Caco-2 (cell line): ENCODE measurements at regions of chr11 and their contacts with region 1.

Region 1: GRCh38 chr11:65274735-65275682 is 13.2 kb downstream of the POLA2 start:
- DNase-seq: peak; percentile 91 to 93
- H3K4me3 ChIP-seq: no peak overlapping the region; the same call in 1 of the 2 replicates
- H3K4me3 Mint-ChIP-seq: peak overlapping the region; percentile 63
- H3K27ac Mint-ChIP-seq: peak overlapping the region; percentile 90
- H3K4me1 ChIP-seq: peaks cover 42% of the 10 kb centered on the region
- H3K4me1 Mint-ChIP-seq: peaks cover 40% of the 10 kb centered on the region
- H3K27me3 ChIP-seq: no peaks in the 10 kb centered on the region
- H3K27me3 Mint-ChIP-seq: no peaks in the 10 kb centered on the region
- CTCF ChIP-seq: peak; percentile 79 to 81

Region 2: DNA sequence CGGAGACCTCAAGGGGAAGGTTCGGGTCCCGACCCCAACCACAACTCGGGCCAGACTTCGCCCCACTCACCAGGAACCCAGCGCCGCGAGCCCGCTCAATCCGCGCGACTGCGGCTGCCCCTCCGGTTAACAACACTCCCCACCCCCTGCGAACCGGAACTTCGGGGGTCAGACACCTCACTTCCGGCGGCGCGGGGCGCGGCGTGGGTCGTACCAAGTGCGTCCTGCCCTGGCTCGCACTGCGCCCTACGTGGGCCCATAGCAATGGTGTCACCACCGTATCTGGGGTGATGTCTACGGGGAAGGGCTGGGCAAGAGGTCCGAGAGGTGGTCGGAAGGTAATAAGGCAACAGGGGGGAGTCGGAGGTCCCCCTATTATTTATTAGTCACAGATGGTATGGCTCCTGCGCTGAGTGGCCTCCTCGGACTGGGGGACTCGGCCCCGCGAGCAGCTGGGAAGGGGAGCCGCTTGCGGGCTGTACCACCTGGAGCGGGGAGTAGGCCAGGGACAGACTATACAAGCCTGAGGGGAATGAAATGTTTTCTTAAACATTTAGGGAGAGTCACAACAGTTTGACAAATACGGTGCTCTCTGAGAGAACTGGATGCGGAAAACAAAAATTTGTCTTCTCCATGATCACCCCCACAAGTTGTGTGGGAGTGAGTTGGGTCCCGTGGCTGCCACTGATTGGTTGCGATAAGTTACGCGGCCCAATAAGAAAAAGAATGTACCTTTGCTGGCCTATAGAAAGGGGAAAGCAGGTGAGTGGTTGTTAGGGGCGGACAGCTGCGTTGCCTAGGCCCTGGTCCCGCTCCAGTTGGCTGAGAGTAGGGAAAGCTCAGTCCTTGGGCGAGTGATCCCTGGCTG is 140.4 kb before region 1 on chr11 and contains the start of gene SYVN1:
- CTCF ChIA-PET with region 1: no interaction called
- POLR2A ChIA-PET with region 1: interaction called, 12 read pairs
- intact Hi-C with region 1: no loop called
- DNase-seq: peak; percentile 94 to 96
- H3K4me3 ChIP-seq: peak within 1 kb of the TSS; percentile 99
- H3K4me3 Mint-ChIP-seq: peak within 1 kb of the TSS; percentile 93
- H3K27ac Mint-ChIP-seq: peak within 1 kb of the TSS; percentile 100
- H3K4me1 ChIP-seq: 0 out of 2 replicates have a peak, but pooled peaks cover 5% of the 10 kb centered on the region
- H3K4me1 Mint-ChIP-seq: peaks cover 8% of the 10 kb centered on the region
- H3K27me3 ChIP-seq: no peaks in the 10 kb centered on the region
- H3K27me3 Mint-ChIP-seq: no peaks in the 10 kb centered on the region
- CTCF ChIP-seq: no peak
- total RNA-seq, gene SYVN1: 50.9 and 56.5 TPM in 2 replicates

Region 3: GRCh38 chr11:65261591-65262380 is 13.2 kb before region 1 on chr11 and contains the start of gene POLA2:
- CTCF ChIA-PET with region 1: interaction called, 44 read pairs
- POLR2A ChIA-PET with region 1: interaction called, 17 read pairs
- intact Hi-C with region 1: no loop called
- DNase-seq: peak; percentile 96
- H3K4me3 ChIP-seq: peak within 1 kb of the TSS; percentile 71
- H3K4me3 Mint-ChIP-seq: peak within 1 kb of the TSS; percentile 81
- H3K27ac Mint-ChIP-seq: peak within 1 kb of the TSS; percentile 70
- H3K4me1 ChIP-seq: no peaks in the 10 kb centered on the region
- H3K4me1 Mint-ChIP-seq: peaks cover 22% of the 10 kb centered on the region
- H3K27me3 ChIP-seq: no peaks in the 10 kb centered on the region
- H3K27me3 Mint-ChIP-seq: no peaks in the 10 kb centered on the region
- CTCF ChIP-seq: no peak
- total RNA-seq, gene POLA2: 23.2 and 25.3 TPM in 2 replicates

Region 4: DNA sequence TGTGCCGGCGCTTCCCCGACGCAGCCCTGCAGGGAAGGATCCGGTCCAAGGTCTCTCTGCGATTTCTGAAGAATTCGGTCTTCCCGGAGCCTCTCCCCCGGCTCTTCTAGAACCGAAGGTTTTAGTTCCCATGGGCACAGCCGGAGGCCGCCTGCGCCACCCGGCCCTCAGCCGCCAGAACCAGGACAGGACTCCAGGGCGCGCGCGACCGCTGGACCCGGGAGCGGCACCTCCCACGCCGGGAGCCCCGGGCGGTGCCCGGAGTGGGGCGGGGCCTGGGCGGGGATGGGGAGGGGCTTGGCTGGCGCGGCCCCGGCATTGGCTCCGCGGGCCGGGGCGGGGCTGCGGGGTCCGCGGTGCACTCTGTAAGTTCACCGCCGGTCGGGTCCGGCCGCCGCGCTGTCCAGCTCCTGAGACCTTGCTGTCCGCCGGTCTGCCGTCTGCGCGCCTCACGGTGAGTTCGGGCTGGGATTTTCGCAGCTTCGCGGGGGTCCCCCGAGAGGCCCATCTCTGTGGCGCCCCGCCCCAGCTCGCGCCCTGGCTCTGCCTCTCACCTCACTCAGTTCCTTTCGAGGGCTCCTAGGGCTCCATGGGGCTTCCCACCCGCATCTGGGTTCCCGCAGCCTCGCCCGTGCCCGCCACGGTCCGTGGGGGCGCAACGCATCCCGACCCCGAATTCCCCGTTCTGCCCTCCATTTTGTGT is 39.6 kb after region 1 on chr11 and contains the start of gene CDC42EP2:
- CTCF ChIA-PET with region 1: interaction called, 337 read pairs
- POLR2A ChIA-PET with region 1: interaction called, 81 read pairs
- intact Hi-C with region 1: loop called (anchors 1 kb)
- DNase-seq: peak; percentile 87 to 94
- H3K4me3 ChIP-seq: peak within 1 kb of the TSS; percentile 99
- H3K4me3 Mint-ChIP-seq: peak within 1 kb of the TSS; percentile 81
- H3K27ac Mint-ChIP-seq: peak within 1 kb of the TSS; percentile 80
- H3K4me1 ChIP-seq: peaks cover 33% of the 10 kb centered on the region
- H3K4me1 Mint-ChIP-seq: peaks cover 28% of the 10 kb centered on the region
- H3K27me3 ChIP-seq: no peaks in the 10 kb centered on the region
- H3K27me3 Mint-ChIP-seq: no peaks in the 10 kb centered on the region
- CTCF ChIP-seq: peak in 1 of 2 experiments; percentile 10
- total RNA-seq, gene CDC42EP2: 38.0 and 40.7 TPM in 2 replicates

Region 5: DNA sequence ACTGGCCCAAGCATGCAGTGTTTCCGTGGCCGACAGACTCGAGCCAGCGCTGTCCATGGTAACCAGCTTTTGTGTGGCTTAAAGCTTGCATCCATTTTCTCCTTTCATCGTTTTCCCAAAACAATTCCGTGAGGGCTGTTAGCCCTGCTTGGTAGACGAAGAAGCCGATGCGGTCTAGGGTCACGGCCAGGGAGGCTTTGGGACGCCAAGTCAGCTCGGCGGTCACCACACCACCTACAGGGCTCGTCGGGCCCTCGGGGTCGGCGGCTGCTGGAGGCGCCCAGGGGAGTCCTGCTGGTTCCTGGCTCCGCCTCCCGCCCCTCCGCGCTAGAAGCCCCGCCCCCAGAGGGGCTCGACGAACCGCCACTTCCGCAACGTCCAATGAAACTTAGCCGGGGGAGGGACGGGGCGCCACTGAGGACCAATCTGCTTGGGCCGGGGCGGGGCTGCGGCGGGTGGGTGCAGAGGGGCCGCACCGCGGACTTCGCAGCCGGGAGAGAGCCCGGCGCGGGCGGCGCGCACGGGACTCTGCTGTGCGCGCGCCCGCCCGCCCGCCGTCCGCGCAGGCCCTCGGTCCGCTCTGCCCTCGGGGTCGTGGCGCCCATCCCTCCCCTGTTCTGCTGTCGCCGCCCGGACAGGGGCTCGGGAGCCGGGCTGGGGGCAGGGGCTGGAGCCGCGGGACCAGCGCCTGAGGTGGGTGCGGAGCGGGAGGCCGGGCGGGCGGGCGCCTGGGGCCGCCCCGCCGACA is 79.4 kb after region 1 on chr11 and contains the start of gene TIGD3:
- CTCF ChIA-PET with region 1: interaction called, 15 read pairs
- POLR2A ChIA-PET with region 1: interaction called, 9 read pairs
- intact Hi-C with region 1: no loop called
- DNase-seq: peak; percentile 98 to 99
- H3K4me3 ChIP-seq: peak within 1 kb of the TSS; percentile 62
- H3K4me3 Mint-ChIP-seq: peak within 1 kb of the TSS; percentile 94
- H3K27ac Mint-ChIP-seq: peak within 1 kb of the TSS; percentile 87
- H3K4me1 ChIP-seq: peaks cover 28% of the 10 kb centered on the region
- H3K4me1 Mint-ChIP-seq: peaks cover 38% of the 10 kb centered on the region
- H3K27me3 ChIP-seq: no peaks in the 10 kb centered on the region
- H3K27me3 Mint-ChIP-seq: no peaks in the 10 kb centered on the region
- CTCF ChIP-seq: no peak
- total RNA-seq, gene TIGD3: 3.0 and 3.2 TPM in 2 replicates

Region 6: DNA sequence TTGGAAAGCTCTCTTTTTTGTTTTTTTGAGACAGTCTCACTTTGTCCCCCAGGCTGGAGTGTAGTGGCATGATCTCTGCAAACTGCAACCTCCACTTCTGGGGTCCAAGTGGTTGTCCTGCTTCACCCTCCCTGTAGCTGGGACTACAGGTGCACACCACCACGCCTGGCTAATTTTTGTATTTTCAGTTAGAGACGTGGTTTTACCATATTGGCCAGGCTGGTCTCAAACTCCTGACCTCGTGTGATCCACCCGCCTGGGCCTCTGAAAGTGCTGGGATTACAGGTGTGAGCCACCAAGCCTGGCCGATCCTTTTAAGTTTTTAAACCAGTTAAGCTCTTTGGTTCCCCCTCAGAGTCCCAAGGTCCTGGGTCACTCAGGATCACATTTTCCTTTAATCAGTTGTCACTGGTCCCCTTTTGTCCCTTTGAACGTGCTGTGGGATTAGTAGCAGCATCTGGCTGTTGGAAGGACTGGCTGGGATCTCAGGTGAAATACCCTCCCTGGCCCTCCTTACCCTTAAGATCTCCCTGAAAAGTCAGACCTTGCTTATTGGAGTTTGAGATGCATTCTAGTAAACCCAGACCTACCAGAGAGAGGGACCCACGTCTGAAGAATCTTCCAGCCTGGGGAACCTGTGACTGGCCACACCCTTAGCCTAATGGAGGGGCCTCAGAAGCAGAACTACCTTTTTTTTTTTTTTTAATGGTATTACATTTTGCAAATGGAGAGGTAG is 231.9 kb after region 1 on chr11:
- CTCF ChIA-PET with region 1: interaction called, 3 read pairs
- POLR2A ChIA-PET with region 1: interaction called, 3 read pairs
- intact Hi-C with region 1: loop called (anchors 1 kb)
- DNase-seq: peak; percentile 72 to 89
- H3K4me3 ChIP-seq: no peak overlapping the region
- H3K4me3 Mint-ChIP-seq: no peak overlapping the region
- H3K27ac Mint-ChIP-seq: no peak overlapping the region
- H3K4me1 ChIP-seq: peaks cover 34% of the 10 kb centered on the region
- H3K4me1 Mint-ChIP-seq: peaks cover 62% of the 10 kb centered on the region
- H3K27me3 ChIP-seq: no peaks in the 10 kb centered on the region
- H3K27me3 Mint-ChIP-seq: peaks cover 2% of the 10 kb centered on the region
- CTCF ChIP-seq: no peak